Heart right ventricle (tissue), 16 donors: ENCODE measurements at regions of chr3 and their contacts with region 1.

Region 1: GRCh38 chr3:152508705-152509104 is 240.0 kb downstream of the MBNL1 start:
- DNase-seq: no peak
- ATAC-seq: peak in 2 of 8 donors; percentile 55
- H3K4me3 ChIP-seq: no peak overlapping the region
- H3K27ac ChIP-seq: no peak overlapping the region
- H3K4me1 ChIP-seq: peaks cover 0 to 3% (median 0%) of the 10 kb centered on the region in 9 donors
- H3K27me3 ChIP-seq: no peaks in the 10 kb centered on the region
- CTCF ChIP-seq: peak; percentile 16 to 68 (median 52)

Region 2: DNA sequence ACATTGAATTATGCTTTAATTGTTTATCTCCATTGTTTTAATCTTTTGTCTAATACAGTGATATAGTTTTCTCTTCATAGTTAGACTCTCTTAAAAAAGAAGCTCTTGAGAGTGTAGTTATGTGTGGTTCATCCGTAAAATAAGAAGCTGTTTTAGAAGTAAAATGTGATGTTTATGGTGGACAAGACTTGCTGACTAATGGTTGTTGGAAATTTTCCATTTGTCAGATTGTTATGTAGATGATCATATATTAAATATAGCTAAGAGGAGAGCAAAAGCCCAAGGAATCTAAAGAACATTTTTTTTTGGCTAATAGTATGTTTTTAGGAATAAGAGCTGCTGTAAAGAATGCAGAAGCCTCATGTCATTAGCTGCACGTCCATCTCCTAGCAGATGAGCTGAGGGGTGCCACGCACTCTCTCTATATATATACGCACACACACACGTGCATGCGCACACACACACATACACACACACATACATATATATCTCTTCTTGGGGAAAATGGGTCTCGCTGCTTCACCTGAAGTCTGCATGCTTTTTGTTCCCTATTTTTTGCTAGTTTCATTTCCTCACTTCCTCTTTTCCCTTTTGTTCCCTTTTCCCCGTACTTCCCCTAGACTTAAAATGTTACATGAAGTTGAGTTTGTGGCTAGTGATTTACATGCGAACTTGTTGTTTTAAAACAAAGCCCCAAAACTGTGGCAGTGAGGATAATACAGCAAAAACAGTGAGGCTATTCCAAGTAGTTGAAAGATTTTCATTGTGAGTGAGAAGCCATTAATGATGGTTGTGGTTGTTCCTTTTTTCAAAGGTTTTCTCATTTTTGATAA is 132.1 kb before region 1 on chr3:
- intact Hi-C with region 1: no loop called
- DNase-seq: no peak
- ATAC-seq: peak in 4 of 8 donors; percentile 22 to 48 (median 40)
- H3K4me3 ChIP-seq: no peak overlapping the region
- H3K27ac ChIP-seq: peak overlapping the region in 9 of 10 donors; percentile 4 to 79 (median 48)
- H3K4me1 ChIP-seq: peaks cover 0 to 84% (median 64%) of the 10 kb centered on the region in 9 donors
- H3K27me3 ChIP-seq: no peaks in the 10 kb centered on the region
- CTCF ChIP-seq: no peak

Region 3: GRCh38 chr3:152834776-152835600 is 326.3 kb after region 1 on chr3 and contains the start of gene P2RY1:
- intact Hi-C with region 1: loop called in 1 of 10 experiments (anchors 10 kb)
- DNase-seq: peak; percentile 61 to 73
- ATAC-seq: peak; percentile 89 to 94 (median 90)
- H3K4me3 ChIP-seq: peak within 1 kb of the TSS; percentile 59 to 87 (median 74)
- H3K27ac ChIP-seq: peak within 1 kb of the TSS; percentile 50 to 87 (median 80)
- H3K4me1 ChIP-seq: peaks cover 0 to 43% (median 21%) of the 10 kb centered on the region in 9 donors
- H3K27me3 ChIP-seq: peaks cover 0 to 5% (median 0%) of the 10 kb centered on the region in 7 donors
- CTCF ChIP-seq: peak in 7 of 9 donors; percentile 21 to 56 (median 51)
- total RNA-seq, gene P2RY1: 3.2 to 7.5 (median 4.8) TPM

Region 4: DNA sequence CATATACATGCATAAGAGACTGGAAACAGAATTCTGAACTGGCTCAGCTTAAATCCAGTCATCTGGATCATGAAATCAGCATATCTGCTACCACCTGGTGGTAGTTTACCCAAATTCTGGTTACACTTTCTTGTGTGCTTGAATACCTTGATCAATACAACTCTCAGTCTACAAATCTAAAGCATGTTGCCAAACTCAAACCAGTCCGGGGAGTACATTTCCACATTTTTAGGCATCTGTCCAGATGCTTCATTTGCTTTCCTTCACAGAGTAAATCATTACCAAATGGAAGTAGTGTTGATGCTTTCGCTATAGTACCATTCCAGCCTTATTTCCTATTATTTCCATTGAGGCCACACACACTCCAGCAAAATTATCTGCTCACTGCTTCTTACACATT is 452.6 kb after region 1 on chr3:
- intact Hi-C with region 1: loop called in 1 of 10 experiments (anchors 10 kb)
- DNase-seq: no peak
- ATAC-seq: peak in 1 of 8 donors; percentile 37
- H3K4me3 ChIP-seq: no peak overlapping the region
- H3K27ac ChIP-seq: no peak overlapping the region
- H3K4me1 ChIP-seq: no peaks in the 10 kb centered on the region
- H3K27me3 ChIP-seq: no peaks in the 10 kb centered on the region
- CTCF ChIP-seq: peak in 7 of 9 donors; percentile 23 to 49 (median 37)

Region 5: GRCh38 chr3:154214306-154214705 is 1705.6 kb after region 1 on chr3:
- intact Hi-C with region 1: loop called in 1 of 10 experiments (anchors 10 kb)
- DNase-seq: no peak
- ATAC-seq: no peak
- H3K4me3 ChIP-seq: no peak overlapping the region
- H3K27ac ChIP-seq: no peak overlapping the region
- H3K4me1 ChIP-seq: no peaks in the 10 kb centered on the region
- H3K27me3 ChIP-seq: no peaks in the 10 kb centered on the region
- CTCF ChIP-seq: no peak